ENCODE measurements at regions of chr19 and their contacts with region 1.

Region 1: DNA sequence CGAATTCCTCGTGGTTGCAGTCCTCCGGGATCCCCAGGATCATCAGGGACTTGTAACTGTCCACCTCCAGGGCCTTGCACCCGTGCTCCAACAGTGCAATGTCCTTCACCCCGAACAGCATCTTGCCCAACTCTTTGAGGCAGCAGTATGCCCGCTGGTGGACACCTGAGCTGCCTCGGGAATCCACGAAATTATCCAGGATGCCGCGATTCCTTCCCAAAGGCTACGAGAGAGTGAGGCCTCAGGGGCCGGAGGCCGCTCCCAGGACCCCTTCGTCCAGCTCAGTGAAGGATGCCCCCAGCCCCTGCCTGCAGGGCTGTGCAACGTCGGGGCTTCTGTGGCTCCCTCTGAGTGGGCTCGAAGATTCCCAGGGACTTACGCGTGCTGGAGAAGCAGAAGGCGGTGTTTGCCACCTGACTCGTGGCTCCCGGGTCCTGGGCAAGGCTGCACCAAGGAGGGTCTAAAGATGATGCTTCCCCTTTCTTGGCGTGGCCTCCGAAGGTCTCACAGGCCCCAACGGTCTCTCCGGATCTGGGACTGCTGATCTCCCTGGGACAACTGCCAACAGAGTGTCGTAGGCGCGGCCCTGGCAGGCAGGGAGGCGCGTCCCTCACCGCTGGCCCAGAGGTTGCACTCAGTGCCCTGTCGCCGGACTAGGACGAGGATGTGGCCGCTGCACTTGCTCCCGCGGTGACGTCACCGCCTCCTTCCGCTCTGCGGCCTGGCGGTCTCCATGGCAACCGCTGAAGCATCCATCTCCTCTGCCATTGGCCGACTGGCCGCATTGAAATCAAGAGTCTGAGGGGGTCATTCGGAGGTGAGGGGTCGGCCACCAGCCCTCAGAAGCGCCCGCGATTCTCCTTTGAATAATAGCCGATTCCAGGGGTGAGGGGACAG is at the start of gene PNMA8C:
- DNase-seq: peak in 1 of 2 donors; percentile 93
- H3K4me3 ChIP-seq: peak within 1 kb of the TSS; percentile 62 to 73
- H3K27ac ChIP-seq: peak within 1 kb of the TSS; percentile 71 to 76
- H3K4me1 ChIP-seq: peaks cover 7 to 11% of the 10 kb centered on the region in 2 donors
- H3K27me3 ChIP-seq: no peaks in the 10 kb centered on the region
- CTCF ChIP-seq: no peak
- total RNA-seq, gene PNMA8C: 0.53 TPM

Region 2: GRCh38 chr19:46480415-46480814 is 51.9 kb after region 1 on chr19:
- intact Hi-C with region 1: loop called (anchors 2 kb)
- DNase-seq: no peak
- H3K4me3 ChIP-seq: no peak overlapping the region
- H3K27ac ChIP-seq: peak overlapping the region; percentile 86 to 91
- H3K4me1 ChIP-seq: peaks cover 0 to 48% of the 10 kb centered on the region in 2 donors
- H3K27me3 ChIP-seq: no peaks in the 10 kb centered on the region
- CTCF ChIP-seq: no peak